Esophagus muscularis mucosa (tissue), 4 donors: ENCODE measurements at regions of chr5 and their contacts with region 1.

Region 1: DNA sequence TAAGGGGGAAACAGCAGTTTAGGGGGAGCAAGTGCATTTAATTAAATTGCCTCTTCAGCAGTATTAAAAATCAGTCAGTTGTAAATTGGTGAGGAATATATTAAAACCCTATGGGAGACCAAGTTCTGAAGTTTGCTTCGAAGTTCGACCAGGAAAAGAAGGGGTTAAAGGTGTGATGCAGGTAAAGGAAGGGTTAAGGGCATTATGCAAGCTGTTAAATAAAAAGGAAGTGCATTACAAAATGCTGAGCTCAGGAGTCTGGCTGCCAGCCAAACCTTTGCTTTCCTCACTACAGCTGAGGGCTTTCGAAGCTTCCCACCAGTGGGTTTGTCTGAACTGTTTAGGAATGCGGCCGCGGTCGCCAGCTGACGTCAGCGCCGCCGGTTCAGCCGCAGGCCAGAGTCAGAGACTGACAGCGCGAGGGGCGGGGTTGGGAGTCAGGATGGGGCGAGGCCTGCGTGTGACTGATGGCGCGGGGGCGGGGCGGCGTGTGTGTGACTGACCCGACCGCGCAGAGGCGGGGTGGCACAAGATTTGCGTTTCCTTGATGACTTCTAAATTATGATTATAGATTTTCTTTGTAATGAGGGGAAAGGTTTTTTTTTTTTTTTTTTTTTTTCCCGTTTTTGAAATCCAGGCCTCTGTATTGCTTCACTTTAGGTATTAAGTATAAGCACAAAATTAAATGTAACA is 76.6 kb downstream of the ZSWIM6 start:
- DNase-seq: peak; percentile 99
- H3K4me3 ChIP-seq: peak overlapping the region; percentile 11 to 37 (median 29)
- H3K27ac ChIP-seq: peak overlapping the region; percentile 24 to 74 (median 60)
- H3K4me1 ChIP-seq: peaks cover 19 to 45% (median 37%) of the 10 kb centered on the region in 4 donors
- H3K27me3 ChIP-seq: no peaks in the 10 kb centered on the region
- CTCF ChIP-seq: peak in 1 of 3 experiments; percentile 23
- EP300 ChIP-seq: peak; percentile 91
- POLR2A ChIP-seq: no peak

Region 2: DNA sequence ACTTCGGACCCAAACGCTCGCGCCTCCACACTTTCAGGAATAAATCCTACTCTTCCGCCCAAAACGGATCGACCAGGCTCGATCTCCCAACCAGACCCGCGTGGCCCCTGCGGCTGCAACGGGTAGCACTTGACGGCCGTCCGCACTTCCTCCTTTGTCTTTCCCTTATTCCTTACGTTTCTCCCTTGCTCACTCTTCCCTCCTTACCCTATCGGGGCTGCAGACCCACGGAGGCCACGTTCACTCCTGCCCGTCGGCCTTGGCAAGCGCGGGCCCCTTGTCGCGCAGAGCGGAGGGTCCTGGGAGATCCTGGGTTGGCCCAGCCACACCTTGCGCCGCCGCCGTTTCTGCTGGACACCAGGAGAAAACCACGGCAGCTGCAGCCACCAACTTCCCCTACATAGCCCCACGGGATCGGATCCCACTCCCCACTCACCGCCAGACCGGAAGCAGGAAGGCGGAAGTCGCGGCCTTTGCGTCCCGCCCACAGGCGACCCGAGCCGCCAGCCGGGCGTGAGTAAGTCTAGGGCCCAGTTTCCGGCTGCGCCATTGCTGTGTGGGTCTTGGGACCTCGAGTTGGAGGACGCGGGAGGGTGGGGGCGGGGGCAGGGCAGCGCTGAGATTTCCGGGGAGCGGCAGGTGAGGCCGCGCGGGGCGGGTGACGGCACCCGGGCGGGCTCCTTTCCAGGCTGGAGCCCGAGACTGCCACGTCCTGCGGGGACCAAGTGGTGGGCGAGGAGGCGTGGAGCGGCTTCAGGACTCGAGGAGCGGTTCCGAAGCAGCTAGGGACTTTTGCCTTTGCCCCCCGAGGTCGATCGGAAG is 246.4 kb before region 1 on chr5 and contains the start of gene SMIM15:
- intact Hi-C with region 1: loop called (anchors 5 kb)
- DNase-seq: peak; percentile 95
- H3K4me3 ChIP-seq: peak within 1 kb of the TSS; percentile 76 to 92 (median 83)
- H3K27ac ChIP-seq: peak within 1 kb of the TSS; percentile 85 to 92 (median 88)
- H3K4me1 ChIP-seq: peaks cover 11 to 40% (median 30%) of the 10 kb centered on the region in 4 donors
- H3K27me3 ChIP-seq: no peaks in the 10 kb centered on the region
- CTCF ChIP-seq: peak in 1 of 3 experiments; percentile 3
- EP300 ChIP-seq: no peak
- POLR2A ChIP-seq: peak; percentile 14
- total RNA-seq, gene SMIM15: 17.0 to 29.6 (median 26.6) TPM

Region 3: GRCh38 chr5:61449804-61450492 is 41.3 kb after region 1 on chr5:
- intact Hi-C with region 1: loop called (anchors 2 kb)
- DNase-seq: no peak
- H3K4me3 ChIP-seq: no peak overlapping the region
- H3K27ac ChIP-seq: peak overlapping the region; percentile 50 to 78 (median 56)
- H3K4me1 ChIP-seq: peaks cover 19 to 53% (median 42%) of the 10 kb centered on the region in 4 donors
- H3K27me3 ChIP-seq: no peaks in the 10 kb centered on the region
- CTCF ChIP-seq: no peak
- EP300 ChIP-seq: no peak
- POLR2A ChIP-seq: no peak

Region 4: GRCh38 chr5:61625681-61626621 is 217.3 kb after region 1 on chr5:
- intact Hi-C with region 1: loop called (anchors 5 kb)
- DNase-seq: no peak
- H3K4me3 ChIP-seq: peak overlapping the region; percentile 64 to 75 (median 70)
- H3K27ac ChIP-seq: peak overlapping the region; percentile 81 to 91 (median 87)
- H3K4me1 ChIP-seq: peaks cover 19 to 34% (median 31%) of the 10 kb centered on the region in 4 donors
- H3K27me3 ChIP-seq: no peaks in the 10 kb centered on the region
- CTCF ChIP-seq: no peak
- EP300 ChIP-seq: no peak
- POLR2A ChIP-seq: no peak

Region 5: DNA sequence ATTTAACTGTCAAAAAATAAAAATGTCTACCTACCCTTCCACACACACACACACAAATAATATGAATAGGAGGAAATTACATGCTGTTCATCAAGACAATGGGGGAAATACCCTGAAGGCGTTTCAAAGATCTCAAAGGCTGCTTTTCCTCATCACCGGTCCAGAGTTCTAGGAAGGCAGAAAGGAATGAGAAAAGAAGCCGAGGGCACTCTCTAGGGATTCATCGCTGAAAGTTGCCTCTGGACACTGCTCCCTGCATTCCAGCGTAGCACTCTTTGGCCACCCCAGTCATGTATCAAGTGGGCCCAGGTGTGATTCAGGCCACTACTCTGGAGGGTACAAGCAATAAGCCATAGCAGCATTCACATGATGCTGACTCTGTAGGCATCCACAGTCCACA is 437.0 kb after region 1 on chr5:
- intact Hi-C with region 1: no loop called
- DNase-seq: no peak
- H3K4me3 ChIP-seq: no peak overlapping the region
- H3K27ac ChIP-seq: no peak overlapping the region
- H3K4me1 ChIP-seq: no peaks in the 10 kb centered on the region
- H3K27me3 ChIP-seq: no peaks in the 10 kb centered on the region
- CTCF ChIP-seq: no peak
- EP300 ChIP-seq: no peak
- POLR2A ChIP-seq: no peak